Activated CD8-positive, alpha-beta T cell treated with anti-CD3 and anti-CD28 coated beads for 36 hours (primary cell): ENCODE measurements at regions of chr3 and their contacts with region 1.

Region 1: GRCh38 chr3:137032465-137033120 is 74.8 kb downstream of the IL20RB start:
- DNase-seq: peak; percentile 92
- ATAC-seq: peak; percentile 97
- H3K4me3 Mint-ChIP-seq: peak overlapping the region; percentile 60
- H3K27ac Mint-ChIP-seq: no peak overlapping the region
- H3K4me1 Mint-ChIP-seq: peaks cover 7% of the 10 kb centered on the region
- H3K27me3 Mint-ChIP-seq: peaks cover 16% of the 10 kb centered on the region
- CTCF ChIP-seq: peak; percentile 99

Region 2: GRCh38 chr3:136992115-136992514 is 40.5 kb before region 1 on chr3:
- CTCF ChIA-PET with region 1: no interaction called
- POLR2A ChIA-PET with region 1: no interaction called
- intact Hi-C with region 1: no loop called
- DNase-seq: no peak
- ATAC-seq: no peak
- H3K4me3 Mint-ChIP-seq: no peak overlapping the region
- H3K27ac Mint-ChIP-seq: no peak overlapping the region
- H3K4me1 Mint-ChIP-seq: peaks cover 5% of the 10 kb centered on the region
- H3K27me3 Mint-ChIP-seq: no peaks in the 10 kb centered on the region
- CTCF ChIP-seq: no peak

Region 3: DNA sequence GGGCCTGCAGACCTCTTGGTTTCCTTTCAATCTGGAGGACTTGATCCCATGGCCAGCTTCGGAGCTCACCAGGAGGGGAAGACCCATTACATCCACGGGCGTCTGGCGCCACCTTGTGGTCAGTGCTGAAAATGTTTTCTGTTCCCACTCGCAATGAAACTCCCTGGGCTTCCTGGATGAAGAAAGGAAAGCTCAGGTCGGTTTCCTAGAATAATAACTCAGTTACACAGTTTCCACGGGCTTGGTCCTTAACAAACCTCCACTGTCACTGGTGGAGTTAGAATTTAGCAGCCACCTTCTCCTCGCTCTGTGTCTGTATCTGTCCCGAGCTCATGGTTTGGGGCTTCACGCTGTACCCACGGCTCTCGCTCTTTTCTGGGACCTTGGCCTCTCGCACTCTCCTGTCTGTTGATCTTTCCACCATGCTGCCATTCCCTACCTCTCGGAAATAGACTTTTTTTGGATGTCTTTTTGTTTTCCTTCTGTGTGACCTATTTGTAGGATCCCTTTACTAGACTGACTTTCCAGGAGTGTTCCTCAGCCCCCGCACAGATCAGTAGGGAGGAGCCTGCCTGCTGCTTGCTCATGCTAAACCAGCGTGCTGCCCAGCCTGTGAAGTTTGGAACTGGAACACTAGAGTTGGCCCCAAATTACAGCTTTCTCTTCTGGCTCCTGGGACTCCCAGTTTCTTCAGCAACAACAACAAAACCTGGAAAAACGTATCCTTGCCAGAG is 18.5 kb before region 1 on chr3:
- CTCF ChIA-PET with region 1: interaction called, 37 read pairs
- POLR2A ChIA-PET with region 1: no interaction called
- intact Hi-C with region 1: no loop called
- DNase-seq: peak; percentile 85
- ATAC-seq: peak; percentile 88
- H3K4me3 Mint-ChIP-seq: peak overlapping the region; percentile 63
- H3K27ac Mint-ChIP-seq: peak overlapping the region; percentile 70
- H3K4me1 Mint-ChIP-seq: peaks cover 8% of the 10 kb centered on the region
- H3K27me3 Mint-ChIP-seq: no peaks in the 10 kb centered on the region
- CTCF ChIP-seq: peak; percentile 85

Region 4: GRCh38 chr3:137020315-137020714 is 12.3 kb before region 1 on chr3:
- CTCF ChIA-PET with region 1: interaction called, 37 read pairs
- POLR2A ChIA-PET with region 1: no interaction called
- intact Hi-C with region 1: no loop called
- DNase-seq: no peak
- ATAC-seq: no peak
- H3K4me3 Mint-ChIP-seq: no peak overlapping the region
- H3K27ac Mint-ChIP-seq: no peak overlapping the region
- H3K4me1 Mint-ChIP-seq: no peaks in the 10 kb centered on the region
- H3K27me3 Mint-ChIP-seq: peaks cover 1% of the 10 kb centered on the region
- CTCF ChIP-seq: no peak

Region 5: GRCh38 chr3:137105277-137105977 is 72.8 kb after region 1 on chr3:
- CTCF ChIA-PET with region 1: interaction called, 18 read pairs
- POLR2A ChIA-PET with region 1: no interaction called
- intact Hi-C with region 1: no loop called
- DNase-seq: peak; percentile 13
- ATAC-seq: no peak
- H3K4me3 Mint-ChIP-seq: no peak overlapping the region
- H3K27ac Mint-ChIP-seq: no peak overlapping the region
- H3K4me1 Mint-ChIP-seq: no peaks in the 10 kb centered on the region
- H3K27me3 Mint-ChIP-seq: peaks cover 8% of the 10 kb centered on the region
- CTCF ChIP-seq: peak; percentile 80

Region 6: GRCh38 chr3:137946345-137946973 is 913.9 kb after region 1 on chr3:
- CTCF ChIA-PET with region 1: interaction called, 10 read pairs
- POLR2A ChIA-PET with region 1: no interaction called
- intact Hi-C with region 1: loop called (anchors 10 kb)
- DNase-seq: peak; percentile 73
- ATAC-seq: peak; percentile 42
- H3K4me3 Mint-ChIP-seq: no peak overlapping the region
- H3K27ac Mint-ChIP-seq: no peak overlapping the region
- H3K4me1 Mint-ChIP-seq: no peaks in the 10 kb centered on the region
- H3K27me3 Mint-ChIP-seq: no peaks in the 10 kb centered on the region
- CTCF ChIP-seq: peak; percentile 82

Region 7: GRCh38 chr3:137970914-137971831 is 938.6 kb after region 1 on chr3:
- CTCF ChIA-PET with region 1: interaction called, 11 read pairs
- POLR2A ChIA-PET with region 1: no interaction called
- intact Hi-C with region 1: no loop called
- DNase-seq: peak; percentile 77
- ATAC-seq: peak; percentile 66
- H3K4me3 Mint-ChIP-seq: no peak overlapping the region
- H3K27ac Mint-ChIP-seq: no peak overlapping the region
- H3K4me1 Mint-ChIP-seq: no peaks in the 10 kb centered on the region
- H3K27me3 Mint-ChIP-seq: peaks cover 13% of the 10 kb centered on the region
- CTCF ChIP-seq: peak; percentile 84